ENCODE measurements at regions of chr7 and their contacts with region 1.

Region 1: DNA sequence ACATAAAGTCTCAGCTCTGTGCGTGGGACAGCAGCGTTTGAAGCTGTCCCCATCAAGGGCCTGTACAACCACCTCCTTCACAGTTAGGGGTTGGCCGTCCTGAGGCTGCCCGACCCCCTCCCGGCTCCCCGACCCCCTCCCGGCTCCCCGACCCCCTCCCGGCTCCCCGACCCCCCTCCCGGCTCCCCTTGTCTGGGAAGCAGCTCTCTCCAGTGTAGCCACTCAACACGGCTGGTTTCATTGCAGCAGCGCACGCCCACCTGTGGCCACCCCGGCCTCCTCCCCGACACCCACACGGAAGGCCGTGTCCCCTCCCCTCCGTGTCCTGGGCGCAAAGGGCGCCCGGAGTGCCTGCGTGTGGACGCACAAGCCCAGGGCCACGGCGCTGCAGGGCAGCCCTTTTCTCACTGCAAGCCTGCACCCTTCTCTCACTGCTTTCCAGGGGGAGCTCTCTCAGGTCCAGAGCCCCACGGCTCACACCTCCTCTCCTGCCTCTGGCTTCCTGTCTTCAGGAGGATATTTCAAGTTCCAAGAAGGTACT is 20.9 kb upstream of the FAM20C start:
- DNase-seq: no peak
- H3K4me3 ChIP-seq: no peak overlapping the region
- H3K27ac ChIP-seq: no peak overlapping the region
- H3K4me1 ChIP-seq: peaks cover 0 to 4% (median 0%) of the 10 kb centered on the region in 4 experiments; a peak in 2 of 7 replicates
- H3K27me3 ChIP-seq: no peaks in the 10 kb centered on the region; a peak in 1 of 7 replicates
- CTCF ChIP-seq: peak in 2 of 3 experiments; percentile 4 to 21; a peak in 1 of 4 replicates
- EP300 ChIP-seq: no peak
- POLR2A ChIP-seq: no peak
- RAD21 ChIP-seq: peak in 1 of 2 experiments; percentile 22; a peak in 1 of 4 replicates

Region 2: DNA sequence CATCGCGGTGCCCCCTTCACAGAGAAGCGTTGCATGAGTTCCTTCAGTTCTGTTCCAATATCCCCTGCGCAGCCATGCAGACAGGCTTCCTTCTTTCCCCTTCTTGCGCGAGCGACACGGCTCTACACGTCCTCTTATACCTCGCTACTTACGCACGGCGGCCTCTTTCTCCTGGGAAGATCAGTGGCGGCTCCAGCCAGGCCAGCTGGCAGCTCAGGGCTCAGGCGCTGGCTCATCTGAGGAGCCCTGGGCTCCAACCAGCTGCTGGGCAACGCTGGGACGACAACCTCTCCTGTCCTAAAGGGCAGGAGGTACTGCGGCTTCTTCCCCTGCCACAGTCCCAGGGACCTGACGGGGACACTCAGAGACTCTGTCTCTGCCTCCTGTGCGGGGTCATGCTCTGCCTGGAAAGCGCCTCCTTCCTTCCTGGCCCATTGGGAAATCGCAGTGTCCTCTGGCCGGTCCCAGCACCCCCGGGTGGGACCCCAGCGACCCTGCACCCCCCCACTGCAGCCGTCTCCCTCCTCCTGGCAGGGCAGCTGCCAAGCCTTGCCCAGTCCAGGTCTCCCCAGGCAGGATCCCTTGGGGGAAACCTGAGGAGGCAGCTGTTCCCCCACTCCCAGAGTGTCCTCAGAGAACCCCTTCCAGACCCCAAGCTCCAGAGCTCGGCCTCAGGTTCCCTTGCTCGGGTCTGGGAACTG is 15.9 kb after region 1 on chr7:
- CTCF ChIA-PET with region 1: interaction called, 14 read pairs
- POLR2A ChIA-PET with region 1: interaction called, 6 read pairs
- DNase-seq: no peak
- H3K4me3 ChIP-seq: no peak overlapping the region
- H3K27ac ChIP-seq: no peak overlapping the region
- H3K4me1 ChIP-seq: peaks cover 0 to 33% (median 24%) of the 10 kb centered on the region in 4 experiments; a peak in 6 of 7 replicates
- H3K27me3 ChIP-seq: peaks cover 0 to 5% (median 1%) of the 10 kb centered on the region in 4 experiments; a peak in 3 of 7 replicates
- CTCF ChIP-seq: no peak
- EP300 ChIP-seq: no peak
- POLR2A ChIP-seq: no peak
- RAD21 ChIP-seq: no peak

Measured in H1 (cell line).